GM13976 (cell line): ENCODE measurements at regions of chr4 and their contacts with region 1.

Region 1: GRCh38 chr4:69707807-69708206 is 52.6 kb downstream of the SULT1B1 start:
- DNase-seq: no peak
- CTCF ChIP-seq: no peak

Region 2: DNA sequence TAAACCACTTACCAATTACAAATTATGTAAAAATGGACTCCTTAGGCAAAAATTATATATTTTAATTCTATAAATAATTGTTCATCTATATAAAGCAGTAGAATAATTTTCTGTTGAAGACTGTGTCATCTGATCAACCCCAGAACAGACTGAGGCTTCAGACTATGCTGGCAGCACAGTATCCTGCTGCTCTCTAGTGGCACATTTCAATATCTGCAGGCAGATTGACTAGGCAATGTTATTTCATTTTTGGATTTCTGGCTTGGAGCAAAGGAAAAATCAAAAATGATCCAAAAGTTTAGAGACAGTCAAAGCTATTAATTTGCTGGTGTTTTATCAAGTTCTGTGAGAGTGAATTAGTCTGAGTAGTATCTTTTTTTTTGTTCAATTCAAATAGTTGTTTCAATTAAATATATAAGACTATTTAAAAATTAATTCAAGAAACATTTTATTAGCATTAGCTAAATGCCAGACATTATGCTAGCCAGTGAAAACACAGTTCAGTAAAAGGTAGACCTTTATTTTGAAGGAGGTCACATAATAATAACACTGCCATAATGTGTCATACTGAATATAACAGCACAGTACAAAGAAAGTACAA is 173.5 kb after region 1 on chr4:
- in situ Hi-C with region 1: loop called (anchors 10 kb)
- DNase-seq: no peak
- CTCF ChIP-seq: peak; percentile 63